Mammary epithelial cell (primary cell): ENCODE measurements at regions of chr11 and their contacts with region 1.

Region 1: GRCh38 chr11:131392528-131393255 is 22.3 kb downstream of the NTM start:
- DNase-seq: no peak
- H3K4me3 ChIP-seq: no peak overlapping the region
- H3K27ac ChIP-seq: no peak overlapping the region
- H3K4me1 ChIP-seq: no peaks in the 10 kb centered on the region
- H3K27me3 ChIP-seq: no peaks in the 10 kb centered on the region
- CTCF ChIP-seq: no peak

Region 2: DNA sequence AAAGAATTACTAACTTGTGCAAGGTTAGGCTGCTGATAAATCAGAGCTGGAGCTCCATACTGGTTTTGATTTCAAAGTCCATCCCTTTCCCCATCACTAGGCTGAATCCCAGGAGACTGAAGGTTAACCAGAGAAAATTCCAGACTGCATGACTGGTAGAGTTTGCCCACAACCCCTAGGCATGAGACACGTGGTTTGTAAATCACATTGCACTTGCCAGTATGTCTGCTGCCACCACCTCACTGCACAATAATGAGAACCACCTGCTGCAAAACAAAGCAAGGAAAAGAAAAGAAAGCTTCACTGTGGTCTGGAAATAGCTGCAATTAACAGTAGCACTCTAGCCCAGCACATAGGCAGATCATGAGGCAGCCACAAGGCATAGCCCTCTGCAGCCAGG is 89.9 kb before region 1 on chr11:
- CTCF ChIA-PET with region 1: no interaction called
- dilution Hi-C with region 1: no loop called
- in situ Hi-C with region 1: no loop called
- intact Hi-C with region 1: no loop called
- DNase-seq: no peak
- H3K4me3 ChIP-seq: no peak overlapping the region
- H3K27ac ChIP-seq: no peak overlapping the region
- H3K4me1 ChIP-seq: no peaks in the 10 kb centered on the region
- H3K27me3 ChIP-seq: no peaks in the 10 kb centered on the region
- CTCF ChIP-seq: no peak

Region 3: DNA sequence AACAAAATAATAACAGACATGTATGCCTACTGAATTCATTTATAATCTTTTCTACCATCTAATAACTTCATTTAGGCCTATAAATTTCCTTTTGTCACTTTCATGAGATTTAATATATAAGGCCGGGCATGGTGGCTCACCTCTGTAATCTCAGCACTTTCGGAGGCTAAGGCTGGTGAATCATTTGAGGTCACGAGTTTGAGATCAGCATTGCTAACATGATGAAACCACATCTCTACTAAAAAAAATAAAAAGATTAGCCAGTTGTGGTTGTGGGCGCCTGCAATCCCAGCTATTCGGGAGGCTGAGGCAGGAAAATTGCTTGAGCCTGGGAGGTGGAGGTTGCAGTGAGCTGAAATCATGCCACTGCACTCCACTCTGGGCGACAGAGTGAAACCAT is 36.5 kb before region 1 on chr11:
- CTCF ChIA-PET with region 1: no interaction called
- dilution Hi-C with region 1: loop called (anchors 5 kb)
- in situ Hi-C with region 1: no loop called
- intact Hi-C with region 1: no loop called
- DNase-seq: peak; percentile 2
- H3K4me3 ChIP-seq: no peak overlapping the region
- H3K27ac ChIP-seq: no peak overlapping the region
- H3K4me1 ChIP-seq: no peaks in the 10 kb centered on the region
- H3K27me3 ChIP-seq: no peaks in the 10 kb centered on the region
- CTCF ChIP-seq: no peak